H1 (cell line): ENCODE measurements at regions of chr17 and their contacts with region 1.

Region 1: GRCh38 chr17:76458580-76459490 is 5.9 kb upstream of the UBE2O start:
- DNase-seq: peak; percentile 79 to 83
- H3K4me3 ChIP-seq: no peak overlapping the region
- H3K27ac ChIP-seq: no peak overlapping the region
- H3K4me1 ChIP-seq: peaks cover 0 to 8% (median 3%) of the 10 kb centered on the region in 4 experiments; a peak in 4 of 7 replicates
- H3K27me3 ChIP-seq: no peaks in the 10 kb centered on the region
- CTCF ChIP-seq: peak; percentile 66 to 86 (median 85)
- EP300 ChIP-seq: no peak
- POLR2A ChIP-seq: no peak
- RAD21 ChIP-seq: peak; percentile 68 to 78

Region 2: GRCh38 chr17:76414334-76415295 is 44.2 kb before region 1 on chr17:
- CTCF ChIA-PET with region 1: interaction called, 197 read pairs
- POLR2A ChIA-PET with region 1: interaction called, 7 read pairs
- DNase-seq: no peak
- H3K4me3 ChIP-seq: no peak overlapping the region
- H3K27ac ChIP-seq: no peak overlapping the region
- H3K4me1 ChIP-seq: peaks cover 4 to 11% (median 6%) of the 10 kb centered on the region in 4 experiments
- H3K27me3 ChIP-seq: no peaks in the 10 kb centered on the region
- CTCF ChIP-seq: no peak
- EP300 ChIP-seq: no peak
- POLR2A ChIP-seq: no peak
- RAD21 ChIP-seq: no peak

Region 3: GRCh38 chr17:76427501-76428231 is 31.2 kb before region 1 on chr17:
- CTCF ChIA-PET with region 1: interaction called, 18 read pairs
- POLR2A ChIA-PET with region 1: no interaction called
- DNase-seq: no peak
- H3K4me3 ChIP-seq: no peak overlapping the region
- H3K27ac ChIP-seq: no peak overlapping the region
- H3K4me1 ChIP-seq: peaks cover 0 to 22% (median 6%) of the 10 kb centered on the region in 4 experiments; a peak in 6 of 7 replicates
- H3K27me3 ChIP-seq: no peaks in the 10 kb centered on the region
- CTCF ChIP-seq: no peak
- EP300 ChIP-seq: no peak
- POLR2A ChIP-seq: no peak
- RAD21 ChIP-seq: no peak

Region 4: DNA sequence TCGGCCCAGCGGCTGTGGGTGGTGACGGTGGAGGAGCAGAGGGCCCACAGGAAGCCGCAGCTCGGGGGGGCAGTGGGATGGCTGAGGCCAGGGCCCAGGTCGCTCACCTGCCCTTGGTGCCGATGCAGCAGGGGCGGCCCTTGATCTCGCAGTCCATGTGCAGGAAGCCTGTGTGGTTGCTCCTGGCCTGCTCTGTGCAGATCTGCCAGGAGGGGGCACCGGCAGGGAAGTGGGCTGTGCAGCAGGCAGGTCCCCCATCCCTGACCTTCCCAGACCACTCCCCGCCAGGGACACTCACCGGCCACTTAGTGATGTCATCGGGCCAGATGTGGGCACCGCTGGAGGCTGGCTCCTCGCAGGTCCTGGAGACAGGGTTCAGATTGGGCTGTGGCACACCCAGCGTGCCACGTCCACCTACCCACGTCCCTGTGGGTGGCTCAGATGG is 14.7 kb after region 1 on chr17:
- CTCF ChIA-PET with region 1: interaction called, 69 read pairs
- POLR2A ChIA-PET with region 1: interaction called, 3 read pairs
- DNase-seq: peak in 1 of 2 experiments; percentile 85
- H3K4me3 ChIP-seq: no peak overlapping the region
- H3K27ac ChIP-seq: no peak overlapping the region
- H3K4me1 ChIP-seq: no peaks in the 10 kb centered on the region
- H3K27me3 ChIP-seq: no peaks in the 10 kb centered on the region
- CTCF ChIP-seq: peak; percentile 71 to 83 (median 78)
- EP300 ChIP-seq: no peak
- POLR2A ChIP-seq: no peak
- RAD21 ChIP-seq: peak; percentile 48 to 68

Region 5: GRCh38 chr17:76515274-76515949 is 56.6 kb after region 1 on chr17:
- CTCF ChIA-PET with region 1: interaction called, 446 read pairs
- POLR2A ChIA-PET with region 1: no interaction called
- DNase-seq: no peak
- H3K4me3 ChIP-seq: no peak overlapping the region
- H3K27ac ChIP-seq: no peak overlapping the region
- H3K4me1 ChIP-seq: peaks cover 0 to 4% (median 0%) of the 10 kb centered on the region in 4 experiments; a peak in 3 of 7 replicates
- H3K27me3 ChIP-seq: no peaks in the 10 kb centered on the region
- CTCF ChIP-seq: no peak
- EP300 ChIP-seq: no peak
- POLR2A ChIP-seq: no peak
- RAD21 ChIP-seq: no peak

Region 6: GRCh38 chr17:76547184-76547641 is 88.4 kb after region 1 on chr17:
- CTCF ChIA-PET with region 1: interaction called, 20 read pairs
- POLR2A ChIA-PET with region 1: no interaction called
- DNase-seq: no peak
- H3K4me3 ChIP-seq: no peak overlapping the region
- H3K27ac ChIP-seq: no peak overlapping the region
- H3K4me1 ChIP-seq: peaks cover 4 to 30% (median 10%) of the 10 kb centered on the region in 4 experiments; a peak in 6 of 7 replicates
- H3K27me3 ChIP-seq: no peaks in the 10 kb centered on the region; a peak in 1 of 7 replicates
- CTCF ChIP-seq: peak; percentile 63 to 82 (median 65)
- EP300 ChIP-seq: no peak
- POLR2A ChIP-seq: no peak
- RAD21 ChIP-seq: peak; percentile 83 to 89

Region 7: DNA sequence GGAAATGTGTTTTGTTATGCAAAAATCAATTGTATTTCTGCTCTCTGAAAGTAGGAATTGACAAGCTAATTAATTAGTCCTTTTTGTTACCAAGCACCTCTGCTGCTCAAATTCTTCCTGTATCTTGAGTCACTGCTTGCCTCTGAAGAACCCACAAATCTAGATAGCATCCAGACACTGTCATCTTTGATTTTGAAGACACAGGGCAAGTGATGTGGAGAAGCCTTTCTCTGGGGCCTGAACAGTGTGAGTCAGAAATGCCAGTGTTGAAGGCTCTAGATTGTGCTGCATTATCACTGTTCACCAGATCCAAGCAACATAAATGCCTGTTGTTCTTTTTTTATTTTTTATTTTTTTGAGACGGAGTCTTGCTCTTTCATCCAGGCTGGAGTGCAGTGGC is 195.6 kb after region 1 on chr17:
- CTCF ChIA-PET with region 1: no interaction called
- POLR2A ChIA-PET with region 1: no interaction called
- DNase-seq: no peak
- H3K4me3 ChIP-seq: no peak overlapping the region
- H3K27ac ChIP-seq: no peak overlapping the region
- H3K4me1 ChIP-seq: no peaks in the 10 kb centered on the region
- H3K27me3 ChIP-seq: no peaks in the 10 kb centered on the region
- CTCF ChIP-seq: no peak
- EP300 ChIP-seq: no peak
- POLR2A ChIP-seq: no peak
- RAD21 ChIP-seq: no peak